ENCODE measurements at regions of chr10 and their contacts with region 1.

Region 1: GRCh38 chr10:44974628-44975431 is 3.8 kb downstream of the DEPP1 start:
- DNase-seq: peak; percentile 76 to 86 (median 82)
- ATAC-seq: peak; percentile 34 to 79 (median 67)
- H3K4me3 ChIP-seq: peak overlapping the region in 11 of 12 donors; percentile 5 to 92 (median 69)
- H3K27ac ChIP-seq: peak overlapping the region; percentile 54 to 97 (median 90)
- H3K4me1 ChIP-seq: peaks cover 9 to 92% (median 59%) of the 10 kb centered on the region in 12 donors
- H3K27me3 ChIP-seq: no peaks in the 10 kb centered on the region
- CTCF ChIP-seq: peak; percentile 92 to 100 (median 98)
- POLR2A ChIP-seq: peak in 1 of 2 donors; percentile 61

Region 2: DNA sequence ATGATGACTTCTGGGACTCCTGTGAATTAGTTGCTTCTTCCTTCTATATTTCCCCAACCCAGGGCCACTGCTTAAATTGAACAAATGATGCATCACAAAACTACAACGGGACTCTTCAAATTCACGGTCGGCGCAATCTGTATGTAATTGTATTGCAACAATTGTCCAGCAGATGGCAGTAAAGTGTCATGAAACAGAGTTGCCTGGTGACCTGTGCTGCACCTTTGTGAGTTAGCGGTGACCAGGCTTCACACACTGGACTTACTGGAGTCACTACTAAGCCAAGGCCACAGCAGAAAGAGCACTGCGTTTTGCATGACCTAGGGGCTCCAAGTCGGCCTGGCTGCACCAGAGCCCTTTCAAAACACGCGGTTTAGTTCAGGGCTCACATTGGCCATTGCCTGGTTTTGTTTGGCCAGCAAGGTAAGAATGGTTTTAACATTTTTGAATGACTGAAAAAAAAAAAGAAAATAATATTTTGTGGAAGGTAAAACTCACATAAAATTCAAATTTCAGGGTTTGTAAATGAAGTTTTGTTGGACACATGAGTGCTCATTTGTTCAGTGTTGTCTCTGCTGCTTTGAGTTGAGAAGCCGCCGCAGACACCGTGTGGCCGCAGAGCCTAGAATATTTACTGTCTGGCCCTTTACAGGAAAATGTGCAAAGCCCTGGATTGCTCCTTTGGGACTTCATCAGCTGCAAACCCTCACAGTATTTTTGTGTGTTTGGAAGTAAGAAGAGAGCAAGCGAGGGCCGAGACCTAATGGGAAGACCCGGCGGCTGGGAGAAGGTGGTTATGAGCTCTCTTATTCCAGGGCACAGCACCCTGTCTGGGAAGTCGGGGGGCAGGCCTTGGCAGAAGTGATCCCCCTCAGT is 1302.9 kb before region 1 on chr10:
- intact Hi-C with region 1: loop called in 1 of 10 experiments (anchors 10 kb)
- DNase-seq: peak in 3 of 5 donors; percentile 52 to 64 (median 52)
- ATAC-seq: peak; percentile 67 to 76 (median 69)
- H3K4me3 ChIP-seq: no peak overlapping the region
- H3K27ac ChIP-seq: no peak overlapping the region
- H3K4me1 ChIP-seq: peaks cover 0 to 20% (median 8%) of the 10 kb centered on the region in 12 donors
- H3K27me3 ChIP-seq: peaks cover 0 to 17% (median 11%) of the 10 kb centered on the region in 9 donors
- CTCF ChIP-seq: peak; percentile 71 to 89 (median 80)
- POLR2A ChIP-seq: no peak

Region 3: DNA sequence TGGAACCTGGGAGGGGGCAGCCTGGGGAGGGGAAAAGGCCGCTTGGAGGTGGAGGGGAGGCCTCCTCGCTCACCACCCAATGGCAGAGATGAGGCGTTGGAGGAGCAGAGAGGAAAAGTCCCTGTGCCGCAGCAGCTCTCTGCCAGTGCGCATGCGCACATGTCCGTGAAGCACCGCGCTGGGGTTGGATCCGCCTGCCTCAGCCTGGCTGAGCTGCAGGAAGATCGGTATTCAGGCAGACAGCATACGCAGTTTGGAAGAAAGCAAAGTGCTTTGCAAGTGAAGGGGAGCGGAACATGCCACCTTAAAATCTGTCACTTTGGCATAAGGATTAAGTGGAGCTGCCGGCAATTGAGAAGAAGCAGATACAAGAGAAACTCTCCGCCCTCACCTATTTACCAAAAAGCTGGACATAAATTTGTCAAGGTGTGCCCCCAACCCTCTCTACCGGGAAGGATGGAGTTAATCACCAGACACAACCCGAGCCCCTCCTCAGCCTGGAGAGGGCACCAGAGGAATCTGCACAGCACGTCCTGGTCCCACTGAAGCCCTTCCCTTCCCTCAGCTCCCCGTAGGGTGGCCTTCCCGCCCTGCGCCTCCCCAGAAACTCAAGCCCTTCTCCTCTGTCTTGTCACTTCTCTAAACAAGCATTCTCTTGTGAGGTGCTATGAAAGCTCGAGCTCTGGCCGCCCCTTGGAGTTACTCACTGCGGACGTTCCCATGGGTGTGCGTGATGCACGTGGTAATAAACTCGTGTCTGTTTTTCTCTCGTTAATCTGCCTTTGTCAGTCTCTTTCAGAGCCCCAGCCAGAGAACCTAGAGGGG is 95.9 kb before region 1 on chr10:
- intact Hi-C with region 1: loop called in 2 of 10 experiments (anchors 10 kb)
- DNase-seq: peak; percentile 88 to 94 (median 91)
- ATAC-seq: peak; percentile 89 to 95 (median 92)
- H3K4me3 ChIP-seq: peak overlapping the region in 11 of 12 donors; percentile 11 to 60 (median 54)
- H3K27ac ChIP-seq: peak overlapping the region in 11 of 12 donors; percentile 18 to 76 (median 55)
- H3K4me1 ChIP-seq: peaks cover 0 to 25% (median 13%) of the 10 kb centered on the region in 12 donors
- H3K27me3 ChIP-seq: no peaks in the 10 kb centered on the region
- CTCF ChIP-seq: peak in 5 of 12 donors; percentile 15 to 36 (median 24)
- POLR2A ChIP-seq: no peak

Region 4: DNA sequence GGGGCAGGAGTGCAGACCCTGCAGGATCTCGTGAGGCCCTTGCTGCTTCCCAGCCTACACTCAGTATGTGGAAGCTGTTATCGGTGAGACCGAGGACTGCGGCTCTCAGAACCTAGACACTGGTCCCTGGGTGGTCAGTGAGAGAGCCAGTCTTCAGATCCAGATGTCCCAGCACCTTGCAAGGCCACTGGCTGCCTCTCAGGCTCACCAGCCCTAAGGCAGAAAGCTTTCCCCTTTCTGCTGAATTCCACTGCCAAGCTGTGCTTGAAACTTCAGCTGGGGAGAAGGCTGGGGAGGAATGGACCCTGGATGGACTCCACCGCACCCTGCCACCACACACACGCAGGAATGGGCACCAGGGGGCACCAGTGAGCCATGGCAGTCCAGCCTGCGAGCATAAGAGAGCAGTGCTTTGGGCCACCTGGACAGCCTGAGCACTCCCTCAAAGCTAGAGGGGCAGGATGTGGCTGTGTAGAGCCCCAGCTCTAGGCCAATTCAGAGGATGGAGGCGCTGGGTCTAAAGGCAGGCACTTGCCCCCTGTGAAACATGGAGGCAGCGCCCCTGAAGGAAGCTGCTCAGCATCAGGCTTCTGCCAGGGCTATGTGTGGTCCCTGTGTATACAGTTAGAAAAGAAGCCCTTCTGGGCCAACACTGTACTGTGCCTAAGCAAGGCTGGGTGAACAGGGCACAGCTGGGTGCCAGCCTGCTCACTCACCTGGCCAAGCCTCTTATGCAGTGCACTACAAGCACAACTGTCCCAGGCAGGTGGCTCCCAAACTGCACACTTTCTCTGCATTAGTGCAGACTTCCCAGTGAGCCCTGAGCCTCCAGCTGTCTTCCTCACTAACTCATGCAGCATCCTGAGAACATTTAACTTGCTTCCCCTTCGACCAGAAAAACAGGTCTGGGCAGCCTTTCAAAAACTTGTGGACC is 42.0 kb before region 1 on chr10:
- intact Hi-C with region 1: loop called (anchors 1 to 5 kb)
- DNase-seq: peak; percentile 89 to 96 (median 92)
- ATAC-seq: peak; percentile 72 to 92 (median 90)
- H3K4me3 ChIP-seq: no peak overlapping the region
- H3K27ac ChIP-seq: peak overlapping the region in 2 of 12 donors; percentile 21 to 31
- H3K4me1 ChIP-seq: peaks cover 0 to 54% (median 39%) of the 10 kb centered on the region in 12 donors
- H3K27me3 ChIP-seq: no peaks in the 10 kb centered on the region
- CTCF ChIP-seq: peak; percentile 92 to 99 (median 98)
- POLR2A ChIP-seq: no peak

Region 5: GRCh38 chr10:45000752-45001380 is 26.0 kb after region 1 on chr10 and contains the start of gene ZNF22:
- intact Hi-C with region 1: loop called in 3 of 10 experiments (anchors 1 to 2 kb)
- DNase-seq: peak; percentile 70 to 85 (median 82)
- ATAC-seq: peak; percentile 14 to 80 (median 63)
- H3K4me3 ChIP-seq: peak within 1 kb of the TSS; percentile 45 to 79 (median 66)
- H3K27ac ChIP-seq: peak within 1 kb of the TSS; percentile 93 to 99 (median 96)
- H3K4me1 ChIP-seq: peaks cover 8 to 73% (median 56%) of the 10 kb centered on the region in 12 donors
- H3K27me3 ChIP-seq: no peaks in the 10 kb centered on the region
- CTCF ChIP-seq: peak in 5 of 12 donors; percentile 10 to 40 (median 19)
- POLR2A ChIP-seq: peak in 1 of 2 donors; percentile 34
- total RNA-seq, gene ZNF22: 12.7 to 16.8 (median 14.6) TPM